Activated B cell treated with CpG ODN at 0.5 μM for 24 hours (primary cell): ENCODE measurements at regions of chr15 and their contacts with region 1.

Region 1: DNA sequence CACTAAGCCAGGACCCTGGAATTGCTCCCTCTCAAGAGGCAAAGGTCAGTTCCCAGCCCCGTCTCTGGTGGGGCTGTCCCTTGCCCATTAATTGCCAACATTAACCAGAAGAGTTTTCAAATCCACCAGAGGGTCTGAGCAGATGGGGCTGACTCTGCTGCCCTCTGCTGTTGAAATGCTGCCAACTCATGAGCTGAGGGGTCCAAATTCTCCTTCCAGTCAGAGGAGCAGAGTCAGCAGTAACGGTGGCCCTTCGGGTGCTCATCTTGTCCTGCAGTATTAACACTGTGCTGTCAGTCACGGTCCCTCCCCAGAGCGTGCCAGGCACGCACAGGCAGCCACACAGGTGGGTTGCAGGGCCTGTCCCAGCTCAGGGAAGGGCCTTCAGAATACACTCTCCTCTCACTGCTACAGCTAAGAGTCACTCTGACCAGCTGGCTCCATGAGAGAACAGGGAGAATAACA is 10.7 kb upstream of the SPTBN5 start:
- DNase-seq: peak; percentile 57
- ATAC-seq: peak; percentile 93
- H3K4me3 Mint-ChIP-seq: no peak overlapping the region
- H3K27ac Mint-ChIP-seq: peak overlapping the region; percentile 11
- H3K4me1 Mint-ChIP-seq: peaks cover 6% of the 10 kb centered on the region
- H3K27me3 Mint-ChIP-seq: no peaks in the 10 kb centered on the region
- CTCF ChIP-seq: peak; percentile 69

Region 2: GRCh38 chr15:41465822-41466421 is 438.7 kb before region 1 on chr15:
- CTCF ChIA-PET with region 1: interaction called, 8 read pairs
- POLR2A ChIA-PET with region 1: no interaction called
- intact Hi-C with region 1: loop called (anchors 5 kb)
- DNase-seq: no peak
- ATAC-seq: peak; percentile 50
- H3K4me3 Mint-ChIP-seq: no peak overlapping the region
- H3K27ac Mint-ChIP-seq: no peak overlapping the region
- H3K4me1 Mint-ChIP-seq: peaks cover 5% of the 10 kb centered on the region
- H3K27me3 Mint-ChIP-seq: no peaks in the 10 kb centered on the region
- CTCF ChIP-seq: no peak

Region 3: GRCh38 chr15:41695750-41696426 is 208.7 kb before region 1 on chr15:
- CTCF ChIA-PET with region 1: interaction called, 7 read pairs
- POLR2A ChIA-PET with region 1: no interaction called
- intact Hi-C with region 1: loop called (anchors 1 kb)
- DNase-seq: no peak
- ATAC-seq: peak; percentile 98
- H3K4me3 Mint-ChIP-seq: peak overlapping the region; percentile 35
- H3K27ac Mint-ChIP-seq: peak overlapping the region; percentile 76
- H3K4me1 Mint-ChIP-seq: peaks cover 45% of the 10 kb centered on the region
- H3K27me3 Mint-ChIP-seq: no peaks in the 10 kb centered on the region
- CTCF ChIP-seq: no peak

Region 4: DNA sequence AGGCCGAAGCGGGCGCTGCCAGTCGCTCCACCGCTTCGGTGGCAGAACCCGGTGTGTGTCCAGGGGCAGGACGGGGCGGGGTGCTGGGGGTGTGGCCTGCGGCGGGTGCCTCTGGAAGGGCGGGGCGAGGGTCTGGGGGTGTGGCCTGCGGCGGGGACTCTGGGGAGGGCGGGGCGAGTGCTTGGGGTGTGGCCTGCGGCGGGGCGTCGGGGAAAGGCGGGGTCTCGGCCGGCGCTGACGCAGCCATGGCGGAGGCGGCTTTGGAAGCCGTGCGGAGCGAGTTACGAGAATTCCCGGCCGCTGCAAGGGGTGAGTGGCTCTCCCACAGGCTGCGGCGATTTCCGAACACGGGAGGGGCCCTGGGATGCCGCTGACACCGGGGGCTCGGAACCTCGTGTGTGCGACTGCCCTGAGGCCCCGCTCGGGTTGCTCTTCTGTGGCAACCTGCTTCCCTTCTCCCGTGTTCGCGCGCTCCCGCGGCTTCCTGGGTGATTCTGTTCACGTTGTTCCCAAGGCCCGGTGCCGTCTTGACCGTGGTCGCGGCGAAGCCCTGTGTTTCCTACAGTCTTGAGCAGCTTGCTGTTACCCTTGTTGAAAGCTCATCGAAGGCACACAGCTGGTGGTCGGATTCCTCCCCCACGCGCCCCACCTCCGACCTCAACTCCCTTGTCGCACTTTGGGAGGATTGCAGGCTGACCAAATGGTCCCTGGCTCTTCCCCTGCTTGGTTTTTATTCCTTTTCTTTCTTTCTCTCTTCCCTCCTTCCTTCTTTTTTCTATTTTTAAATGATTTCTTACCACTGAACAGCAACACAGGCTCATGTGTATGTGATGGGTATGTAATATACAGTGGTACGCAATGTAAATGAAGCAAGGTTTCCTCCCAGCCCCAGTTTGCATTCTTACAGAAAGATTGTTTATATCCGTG is 76.4 kb before region 1 on chr15 and contains the start of gene JMJD7:
- CTCF ChIA-PET with region 1: interaction called, 6 read pairs
- POLR2A ChIA-PET with region 1: interaction called, 3 read pairs
- intact Hi-C with region 1: loop called (anchors 1 kb)
- DNase-seq: peak; percentile 93
- ATAC-seq: peak; percentile 98
- H3K4me3 Mint-ChIP-seq: peak within 1 kb of the TSS; percentile 91
- H3K27ac Mint-ChIP-seq: peak within 1 kb of the TSS; percentile 73
- H3K4me1 Mint-ChIP-seq: peaks cover 21% of the 10 kb centered on the region
- H3K27me3 Mint-ChIP-seq: no peaks in the 10 kb centered on the region
- CTCF ChIP-seq: no peak
- total RNA-seq, gene JMJD7: 12.1 and 16.5 TPM in 2 replicates

Region 5: GRCh38 chr15:41930221-41930866 is 25.8 kb after region 1 on chr15:
- CTCF ChIA-PET with region 1: interaction called, 10 read pairs
- POLR2A ChIA-PET with region 1: interaction called, 7 read pairs
- intact Hi-C with region 1: no loop called
- DNase-seq: no peak
- ATAC-seq: no peak
- H3K4me3 Mint-ChIP-seq: peak overlapping the region; percentile 65
- H3K27ac Mint-ChIP-seq: peak overlapping the region; percentile 88
- H3K4me1 Mint-ChIP-seq: peaks cover 86% of the 10 kb centered on the region
- H3K27me3 Mint-ChIP-seq: no peaks in the 10 kb centered on the region
- CTCF ChIP-seq: no peak

Region 6: DNA sequence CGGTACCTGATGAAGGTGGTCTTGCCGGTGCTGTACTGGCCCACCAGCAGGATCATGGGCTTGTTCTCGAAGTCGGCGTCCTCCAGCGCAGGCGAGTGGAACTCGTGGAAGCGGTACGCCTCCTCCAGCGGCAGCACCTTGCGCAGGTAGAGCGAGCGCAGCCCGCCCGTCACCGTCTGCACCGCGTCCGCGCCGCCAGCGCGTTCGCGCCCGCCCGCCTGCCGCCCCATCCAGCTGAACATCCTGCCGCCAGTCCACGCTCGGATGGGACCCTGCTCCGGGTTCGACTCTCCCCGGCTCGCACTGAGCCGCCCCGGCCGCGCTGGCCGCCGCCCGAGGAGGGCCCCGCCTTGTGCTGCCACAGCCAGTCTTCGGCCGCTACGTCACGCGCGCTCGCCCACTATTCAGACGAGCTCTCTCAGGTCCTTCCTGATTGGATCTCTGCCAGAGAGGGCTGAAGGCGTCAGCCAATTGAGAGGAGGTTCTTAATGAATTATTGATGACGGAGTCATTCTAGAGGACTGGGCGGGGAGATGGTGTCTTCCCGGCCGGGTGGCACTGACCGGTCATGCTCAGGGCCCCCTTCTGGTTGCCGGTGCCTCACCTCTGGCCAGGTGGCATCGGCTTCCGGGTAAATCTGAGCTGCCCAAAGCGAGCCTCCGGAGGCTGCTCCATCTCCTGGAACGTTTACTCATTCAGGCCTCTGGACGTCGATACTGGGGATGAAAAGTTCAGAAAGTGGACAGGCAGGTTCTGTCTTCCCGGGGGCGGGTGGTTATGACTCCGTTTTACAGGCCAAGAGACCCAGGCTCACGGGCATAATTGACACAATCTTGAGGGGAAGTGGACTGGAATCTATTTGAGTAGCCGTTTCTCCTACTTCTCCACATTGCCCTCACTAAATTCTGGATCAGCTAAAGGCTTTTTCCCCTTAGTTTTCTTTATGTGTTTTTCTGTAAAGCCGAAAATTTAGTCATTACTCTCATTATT is 68.0 kb after region 1 on chr15 and contains the start of gene EHD4:
- CTCF ChIA-PET with region 1: interaction called, 16 read pairs
- POLR2A ChIA-PET with region 1: interaction called, 14 read pairs
- intact Hi-C with region 1: loop called (anchors 1 kb)
- DNase-seq: peak; percentile 88
- ATAC-seq: peak; percentile 84
- H3K4me3 Mint-ChIP-seq: peak within 1 kb of the TSS; percentile 93
- H3K27ac Mint-ChIP-seq: peak within 1 kb of the TSS; percentile 90
- H3K4me1 Mint-ChIP-seq: peaks cover 46% of the 10 kb centered on the region
- H3K27me3 Mint-ChIP-seq: peaks cover 7% of the 10 kb centered on the region
- CTCF ChIP-seq: no peak
- total RNA-seq, gene EHD4: 38.4 and 42.6 TPM in 2 replicates